BJ (cell line): ENCODE measurements at regions of chr19 and their contacts with region 1.

Region 1: DNA sequence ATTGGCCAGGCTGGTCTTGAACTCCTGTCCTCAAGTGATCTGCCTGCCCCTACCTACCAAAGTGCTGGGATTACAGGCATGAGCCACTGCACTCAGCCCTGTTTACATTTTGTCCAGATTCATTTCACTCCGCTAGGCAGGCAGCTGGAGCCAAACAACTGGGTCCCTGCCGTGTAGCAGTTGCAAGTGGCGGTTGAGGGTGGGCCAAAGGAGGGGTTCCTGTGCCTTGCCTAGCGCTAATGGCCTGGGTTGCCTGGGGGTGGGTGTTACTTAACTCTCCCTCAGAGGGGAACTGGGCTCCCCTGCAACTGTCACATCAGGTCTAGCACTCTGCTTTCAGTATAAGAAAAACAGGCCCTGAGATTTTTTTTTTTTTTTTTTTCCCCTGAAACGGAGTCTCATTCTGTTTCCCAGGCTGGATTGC is 7.4 kb downstream of the ACP5 start:
- DNase-seq: no peak
- H3K4me3 ChIP-seq: no peak overlapping the region
- H3K27me3 ChIP-seq: no peaks in the 10 kb centered on the region
- CTCF ChIP-seq: no peak

Region 2: GRCh38 chr19:11558881-11559828 is 10.9 kb before region 1 on chr19 and contains the start of gene ELOF1:
- CTCF ChIA-PET with region 1: interaction called, 19 read pairs
- POLR2A ChIA-PET with region 1: no interaction called
- DNase-seq: peak; percentile 88
- H3K4me3 ChIP-seq: peak within 1 kb of the TSS; percentile 66
- H3K27me3 ChIP-seq: no peaks in the 10 kb centered on the region
- CTCF ChIP-seq: peak; percentile 42
- polyA plus RNA-seq, gene ELOF1: 70.7 and 83.9 TPM in 2 replicates

Region 3: DNA sequence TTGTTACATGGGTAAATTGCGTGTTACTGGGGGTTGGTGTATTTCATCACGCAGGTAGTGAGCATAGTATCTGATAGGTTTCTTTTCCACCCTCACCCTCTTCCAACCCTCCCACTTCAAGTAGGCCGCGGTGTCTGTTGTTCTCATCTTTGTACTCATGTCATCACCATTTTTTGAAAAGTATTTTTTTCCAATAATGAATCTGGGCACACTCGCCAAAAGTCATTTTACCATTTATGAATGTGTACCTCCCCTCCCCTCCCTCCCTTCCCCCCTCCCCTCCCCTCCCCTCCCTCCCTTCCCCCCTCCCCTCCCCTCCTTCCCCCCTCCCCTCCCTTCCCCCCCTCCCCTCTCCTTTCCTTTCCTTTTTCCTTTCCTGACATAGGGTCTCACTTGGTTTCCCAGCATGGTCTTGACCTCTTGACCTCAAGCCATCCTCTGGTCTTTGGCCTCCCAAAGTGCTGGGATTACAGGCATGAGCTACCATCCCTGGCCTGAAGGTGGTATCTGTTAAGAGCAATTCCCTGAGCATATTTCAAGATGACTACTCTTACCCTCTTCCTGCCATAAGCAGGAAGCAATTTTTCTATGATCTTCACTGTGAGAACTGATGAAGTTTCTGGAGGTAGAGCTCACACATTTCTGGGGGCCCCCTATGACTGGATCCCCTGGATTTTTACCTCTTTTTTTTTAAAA is 42.9 kb after region 1 on chr19:
- CTCF ChIA-PET with region 1: no interaction called
- POLR2A ChIA-PET with region 1: no interaction called
- DNase-seq: no peak
- H3K4me3 ChIP-seq: no peak overlapping the region
- H3K27me3 ChIP-seq: no peaks in the 10 kb centered on the region
- CTCF ChIP-seq: no peak